ENCODE measurements at regions of chr4 and their contacts with region 1.

Region 1: GRCh38 chr4:174260099-174260498 is 23.4 kb downstream of the FBXO8 start:
- DNase-seq: peak in 1 of 2 experiments; percentile 49
- H3K4me3 ChIP-seq: no peak overlapping the region
- H3K4me3 Mint-ChIP-seq: no peak overlapping the region
- H3K27ac Mint-ChIP-seq: no peak overlapping the region
- H3K4me1 ChIP-seq: peaks cover 10% of the 10 kb centered on the region; the same call in 1 of the 2 replicates
- H3K4me1 Mint-ChIP-seq: no peaks in the 10 kb centered on the region
- H3K27me3 ChIP-seq: no peaks in the 10 kb centered on the region
- H3K27me3 Mint-ChIP-seq: no peaks in the 10 kb centered on the region
- CTCF ChIP-seq: no peak

Region 2: DNA sequence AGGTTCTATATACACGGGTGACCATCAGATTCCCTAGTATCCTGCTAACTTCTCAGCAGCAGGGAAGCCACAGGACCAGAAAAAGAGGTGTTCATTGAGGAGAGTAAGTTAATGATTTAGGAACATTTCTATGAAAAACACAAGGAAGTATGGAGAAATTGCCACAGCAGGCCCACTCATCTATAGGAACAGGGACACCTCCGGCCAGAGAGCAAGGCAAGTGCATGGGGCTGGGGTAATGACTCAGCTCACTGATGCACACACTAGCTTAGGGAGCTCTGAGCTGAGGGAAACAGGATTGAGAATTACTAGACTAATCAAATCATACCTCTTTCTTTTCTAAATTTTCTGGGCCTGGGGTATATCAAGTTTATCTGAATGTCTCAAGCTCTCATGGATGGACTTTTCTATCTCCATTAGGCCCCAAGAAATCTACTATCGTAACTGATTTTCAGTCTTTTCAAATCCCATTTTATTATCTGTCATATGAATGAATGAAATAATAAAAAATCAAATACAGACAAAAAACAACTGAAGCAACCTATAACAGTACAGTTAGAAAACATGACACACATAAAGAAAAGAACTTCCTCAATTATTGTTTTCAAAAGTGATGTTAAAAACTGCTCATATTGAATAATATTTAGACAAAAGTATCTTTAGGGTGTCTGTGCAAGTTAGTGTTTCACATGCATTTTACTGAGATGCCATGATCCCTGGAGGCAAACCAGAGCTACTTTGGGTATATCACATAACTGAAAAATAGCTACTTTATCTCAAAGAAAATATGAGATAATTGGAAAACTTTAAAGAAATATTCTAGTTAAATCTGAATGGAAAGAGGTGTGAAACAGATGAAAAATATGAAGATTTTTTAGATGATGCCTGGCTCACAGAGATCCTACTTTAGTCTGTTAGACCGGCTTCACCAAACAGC is 66.4 kb before region 1 on chr4:
- CTCF ChIA-PET with region 1: no interaction called
- POLR2A ChIA-PET with region 1: no interaction called
- intact Hi-C with region 1: loop called (anchors 1 kb)
- DNase-seq: peak; percentile 47 to 56
- H3K4me3 ChIP-seq: no peak overlapping the region
- H3K4me3 Mint-ChIP-seq: peak overlapping the region; percentile 12
- H3K27ac Mint-ChIP-seq: peak overlapping the region; percentile 59
- H3K4me1 ChIP-seq: peaks cover 43% of the 10 kb centered on the region
- H3K4me1 Mint-ChIP-seq: peaks cover 8% of the 10 kb centered on the region
- H3K27me3 ChIP-seq: no peaks in the 10 kb centered on the region
- H3K27me3 Mint-ChIP-seq: no peaks in the 10 kb centered on the region
- CTCF ChIP-seq: no peak

Region 3: DNA sequence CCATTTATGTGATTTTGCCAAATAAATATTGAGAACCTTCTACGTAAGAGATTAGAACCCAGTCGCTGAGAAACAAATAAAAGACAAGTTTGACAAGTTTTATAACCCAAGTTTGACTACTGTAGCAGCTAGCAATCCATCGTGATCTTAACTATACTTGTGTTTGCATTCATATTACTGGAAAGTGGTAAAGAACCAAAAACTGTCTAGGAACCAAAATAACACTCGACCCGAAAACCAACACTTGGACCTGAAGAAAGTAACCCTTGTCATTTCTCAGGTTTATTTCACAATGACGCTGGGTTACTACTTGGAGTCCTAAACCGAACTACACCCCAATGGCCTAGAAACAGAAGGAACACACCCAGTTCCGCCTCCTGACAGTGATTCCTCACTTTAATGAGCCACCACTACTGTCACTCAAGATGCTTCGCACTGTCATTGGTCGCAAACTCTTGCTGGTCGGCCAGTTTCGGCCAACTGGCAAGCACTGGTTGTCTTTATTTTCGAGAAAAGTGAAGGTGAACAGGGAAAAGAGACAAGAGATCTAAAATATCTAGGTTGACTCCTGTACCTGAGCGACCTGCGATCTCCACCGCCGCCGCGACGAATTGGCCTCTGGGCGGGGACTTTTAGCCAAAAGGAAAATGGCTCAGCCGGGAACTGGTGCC is 22.9 kb after region 1 on chr4:
- CTCF ChIA-PET with region 1: no interaction called
- POLR2A ChIA-PET with region 1: no interaction called
- intact Hi-C with region 1: loop called (anchors 1 kb)
- DNase-seq: peak; percentile 86 to 87
- H3K4me3 ChIP-seq: peak overlapping the region; percentile 61
- H3K4me3 Mint-ChIP-seq: peak overlapping the region; percentile 81
- H3K27ac Mint-ChIP-seq: peak overlapping the region; percentile 99
- H3K4me1 ChIP-seq: peaks cover 7% of the 10 kb centered on the region; the same call in 1 of the 2 replicates
- H3K4me1 Mint-ChIP-seq: peaks cover 11% of the 10 kb centered on the region
- H3K27me3 ChIP-seq: no peaks in the 10 kb centered on the region
- H3K27me3 Mint-ChIP-seq: no peaks in the 10 kb centered on the region
- CTCF ChIP-seq: no peak

Region 4: GRCh38 chr4:174828845-174829701 is 569.0 kb after region 1 on chr4 and contains the start of gene GLRA3:
- CTCF ChIA-PET with region 1: no interaction called
- POLR2A ChIA-PET with region 1: no interaction called
- intact Hi-C with region 1: no loop called
- DNase-seq: peak; percentile 57 to 60
- H3K4me3 ChIP-seq: no peak within 1 kb of the TSS
- H3K4me3 Mint-ChIP-seq: peak within 1 kb of the TSS; percentile 52
- H3K27ac Mint-ChIP-seq: no peak within 1 kb of the TSS
- H3K4me1 ChIP-seq: no peaks in the 10 kb centered on the region
- H3K4me1 Mint-ChIP-seq: no peaks in the 10 kb centered on the region
- H3K27me3 ChIP-seq: no peaks in the 10 kb centered on the region
- H3K27me3 Mint-ChIP-seq: no peaks in the 10 kb centered on the region
- CTCF ChIP-seq: no peak
- total RNA-seq, gene GLRA3: not detected in 2 replicates